Right ventricle myocardium inferior (tissue), 1 donor: ENCODE measurements at regions of chr10 and their contacts with region 1.

Region 1: DNA sequence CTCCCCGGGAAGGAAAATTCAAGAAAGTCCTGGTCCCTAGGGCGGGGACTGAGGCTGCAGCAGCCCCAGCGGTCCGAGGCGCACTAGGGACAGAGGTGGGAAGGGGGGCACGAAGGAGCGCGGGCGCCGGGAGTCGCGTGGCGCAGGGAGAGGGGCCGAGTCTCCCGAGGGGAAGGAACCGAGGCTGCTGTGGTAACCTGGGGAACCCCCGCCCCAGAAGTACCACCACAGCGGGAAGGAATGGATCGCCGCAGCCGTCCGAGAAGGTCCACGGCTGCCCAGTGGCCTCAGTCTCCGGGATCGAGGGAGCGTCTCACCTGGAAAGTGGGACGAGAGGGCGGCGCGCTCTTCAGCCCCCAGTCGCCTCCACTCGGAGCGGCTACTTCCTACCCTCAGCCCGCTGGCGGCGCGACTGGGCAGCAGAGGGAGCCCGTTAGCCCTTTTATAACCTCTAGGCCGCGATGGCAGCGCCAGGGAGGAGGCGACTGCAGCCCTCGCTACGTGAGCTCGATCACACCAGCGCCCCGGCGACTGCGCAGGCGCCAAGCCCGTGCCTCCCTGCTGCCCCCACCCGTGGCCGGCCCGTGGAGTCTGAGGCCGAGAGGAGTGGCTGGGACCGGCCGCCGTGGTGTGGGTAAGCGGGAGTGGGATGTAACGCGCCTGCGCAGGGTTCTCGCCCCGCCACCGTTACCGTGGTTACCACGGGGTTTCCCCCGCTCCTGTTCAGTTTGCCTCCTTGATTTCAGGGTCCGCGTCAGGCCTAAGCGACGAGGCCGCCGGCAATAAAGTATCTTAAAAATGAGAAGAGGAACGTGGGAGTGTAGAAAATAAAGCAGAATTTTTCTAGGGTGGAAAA is at the start of gene P4HA1:
- DNase-seq: peak; percentile 100
- ATAC-seq: peak; percentile 98
- total RNA-seq, gene P4HA1: 77.0 TPM

Region 2: GRCh38 chr10:73110345-73110849 is 13.7 kb after region 1 on chr10 and contains the start of gene NUDT13:
- intact Hi-C with region 1: loop called (anchors 1 kb)
- DNase-seq: no peak
- ATAC-seq: peak; percentile 97
- total RNA-seq, gene NUDT13: 3.6 TPM

Region 3: GRCh38 chr10:73117976-73118743 is 21.5 kb after region 1 on chr10:
- intact Hi-C with region 1: loop called (anchors 2 kb)
- DNase-seq: no peak
- ATAC-seq: peak; percentile 86

Region 4: DNA sequence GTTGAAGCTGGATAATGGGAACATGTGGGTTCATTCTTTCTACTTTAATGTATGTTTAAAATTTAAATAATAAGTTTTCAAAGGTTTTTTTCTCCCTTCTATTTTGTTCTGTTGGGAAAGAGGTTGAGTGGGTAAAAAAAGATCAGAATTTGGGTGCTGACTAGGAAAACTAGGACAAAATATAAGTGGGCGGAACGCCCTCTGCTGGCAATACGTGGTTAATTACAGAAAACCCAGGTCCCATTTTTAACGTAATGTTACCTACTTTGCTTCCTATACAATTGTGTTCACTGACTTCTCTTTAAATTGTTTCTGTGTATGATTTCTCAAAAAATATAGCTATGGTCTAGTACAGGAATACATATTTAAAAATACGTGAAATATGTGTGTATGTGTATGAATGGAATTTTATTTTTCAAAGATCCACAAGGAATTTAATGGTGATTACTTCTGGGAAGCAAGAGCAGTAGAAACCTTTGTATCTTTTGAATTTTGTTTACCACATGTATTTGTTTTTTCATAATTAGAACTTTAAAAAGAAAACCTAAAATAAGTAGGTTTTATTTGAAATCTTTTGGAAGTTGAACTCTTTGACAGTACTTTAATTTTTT is 62.5 kb after region 1 on chr10:
- intact Hi-C with region 1: loop called (anchors 5 kb)
- DNase-seq: no peak
- ATAC-seq: no peak

Region 5: GRCh38 chr10:73174148-73174925 is 77.7 kb after region 1 on chr10:
- intact Hi-C with region 1: no loop called
- DNase-seq: no peak
- ATAC-seq: no peak

Region 6: DNA sequence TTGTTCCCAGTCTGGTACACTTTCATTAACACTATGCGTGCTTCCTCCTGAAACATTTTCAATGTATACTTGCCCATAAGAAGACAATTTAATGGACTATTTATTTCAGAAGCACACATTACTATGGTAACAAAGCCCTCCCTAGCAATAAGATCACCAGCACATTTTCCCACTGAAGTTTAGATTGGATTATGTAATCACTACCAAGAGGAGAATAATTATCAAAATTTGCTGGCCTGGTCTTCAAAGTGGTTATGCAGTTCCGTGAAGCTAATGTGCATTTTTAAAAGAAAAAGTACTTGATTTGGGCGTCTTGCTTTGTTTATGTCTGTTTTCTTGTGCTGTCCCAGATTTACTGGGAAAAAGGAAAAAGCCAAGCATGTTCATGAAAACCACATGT is 992.0 kb after region 1 on chr10:
- intact Hi-C with region 1: no loop called
- DNase-seq: no peak
- ATAC-seq: no peak